ENCODE measurements at regions of chr1 and their contacts with region 1.

Region 1: GRCh38 chr1:247078261-247079140 is at the start of gene ZNF670:
- DNase-seq: peak; percentile 100
- H3K4me3 Mint-ChIP-seq: peak within 1 kb of the TSS; percentile 78
- H3K27ac Mint-ChIP-seq: peak within 1 kb of the TSS; percentile 92
- H3K4me1 Mint-ChIP-seq: peaks cover 18% of the 10 kb centered on the region
- H3K27me3 Mint-ChIP-seq: no peaks in the 10 kb centered on the region
- CTCF ChIP-seq: no peak
- total RNA-seq, gene ZNF670: 7.1 and 7.7 TPM in 2 replicates

Region 2: GRCh38 chr1:246907472-246907871 is 171.0 kb before region 1 on chr1:
- CTCF ChIA-PET with region 1: interaction called, 11 read pairs
- POLR2A ChIA-PET with region 1: interaction called, 4 read pairs
- intact Hi-C with region 1: loop called (anchors 2 kb)
- DNase-seq: peak; percentile 78
- H3K4me3 Mint-ChIP-seq: no peak overlapping the region
- H3K27ac Mint-ChIP-seq: peak overlapping the region; percentile 25
- H3K4me1 Mint-ChIP-seq: no peaks in the 10 kb centered on the region
- H3K27me3 Mint-ChIP-seq: no peaks in the 10 kb centered on the region
- CTCF ChIP-seq: peak; percentile 74

Region 3: GRCh38 chr1:247007511-247008405 is 70.7 kb before region 1 on chr1 and contains the start of gene ZNF695:
- CTCF ChIA-PET with region 1: interaction called, 5 read pairs
- POLR2A ChIA-PET with region 1: interaction called, 8 read pairs
- intact Hi-C with region 1: loop called (anchors 5 kb)
- DNase-seq: peak; percentile 100
- H3K4me3 Mint-ChIP-seq: peak within 1 kb of the TSS; percentile 96
- H3K27ac Mint-ChIP-seq: peak within 1 kb of the TSS; percentile 99
- H3K4me1 Mint-ChIP-seq: no peaks in the 10 kb centered on the region
- H3K27me3 Mint-ChIP-seq: no peaks in the 10 kb centered on the region
- CTCF ChIP-seq: no peak
- total RNA-seq, gene ZNF695: 8.7 and 13.8 TPM in 2 replicates

Region 4: DNA sequence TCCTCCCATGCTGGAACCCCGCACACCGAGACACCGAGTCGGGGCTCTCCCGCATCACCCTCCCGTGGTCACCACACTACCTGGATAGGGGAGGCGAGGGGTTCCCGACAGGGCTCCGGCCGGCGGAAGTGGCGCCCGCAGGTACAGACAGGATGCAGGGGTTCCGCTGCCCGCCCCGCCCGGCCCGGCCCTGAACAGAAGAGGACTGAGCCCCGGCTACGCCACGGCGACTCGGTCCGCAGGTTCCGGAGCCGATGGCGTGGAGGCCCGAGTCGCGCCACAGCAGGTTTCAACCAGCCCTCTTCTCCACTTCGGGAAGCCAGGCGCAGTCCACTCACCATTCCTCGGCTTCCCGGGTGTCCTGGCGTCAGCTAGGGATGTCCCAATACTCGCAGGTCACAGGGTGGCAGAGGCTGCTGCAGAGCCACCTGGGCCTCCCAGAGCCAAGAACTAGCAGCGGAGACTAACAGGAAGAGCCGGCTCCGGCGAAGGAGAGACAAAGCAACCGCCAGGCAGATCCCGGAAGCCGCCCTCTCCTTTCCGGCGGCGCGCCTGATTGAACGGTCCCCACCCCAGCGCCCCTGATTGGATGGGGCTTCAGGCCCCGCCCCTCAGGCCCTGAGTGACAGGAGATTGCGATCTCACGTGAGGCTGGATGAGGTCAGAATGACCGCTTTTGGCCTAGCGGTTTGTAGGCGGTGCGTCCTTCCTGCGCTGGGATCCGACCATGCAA is 25.5 kb after region 1 on chr1 and contains the start of gene ZNF669:
- CTCF ChIA-PET with region 1: interaction called, 3 read pairs
- POLR2A ChIA-PET with region 1: interaction called, 36 read pairs
- intact Hi-C with region 1: loop called (anchors 1 kb)
- DNase-seq: peak; percentile 99
- H3K4me3 Mint-ChIP-seq: peak within 1 kb of the TSS; percentile 94
- H3K27ac Mint-ChIP-seq: peak within 1 kb of the TSS; percentile 93
- H3K4me1 Mint-ChIP-seq: peaks cover 6% of the 10 kb centered on the region
- H3K27me3 Mint-ChIP-seq: no peaks in the 10 kb centered on the region
- CTCF ChIP-seq: no peak
- total RNA-seq, gene ZNF669: 11.6 and 11.9 TPM in 2 replicates

Region 5: DNA sequence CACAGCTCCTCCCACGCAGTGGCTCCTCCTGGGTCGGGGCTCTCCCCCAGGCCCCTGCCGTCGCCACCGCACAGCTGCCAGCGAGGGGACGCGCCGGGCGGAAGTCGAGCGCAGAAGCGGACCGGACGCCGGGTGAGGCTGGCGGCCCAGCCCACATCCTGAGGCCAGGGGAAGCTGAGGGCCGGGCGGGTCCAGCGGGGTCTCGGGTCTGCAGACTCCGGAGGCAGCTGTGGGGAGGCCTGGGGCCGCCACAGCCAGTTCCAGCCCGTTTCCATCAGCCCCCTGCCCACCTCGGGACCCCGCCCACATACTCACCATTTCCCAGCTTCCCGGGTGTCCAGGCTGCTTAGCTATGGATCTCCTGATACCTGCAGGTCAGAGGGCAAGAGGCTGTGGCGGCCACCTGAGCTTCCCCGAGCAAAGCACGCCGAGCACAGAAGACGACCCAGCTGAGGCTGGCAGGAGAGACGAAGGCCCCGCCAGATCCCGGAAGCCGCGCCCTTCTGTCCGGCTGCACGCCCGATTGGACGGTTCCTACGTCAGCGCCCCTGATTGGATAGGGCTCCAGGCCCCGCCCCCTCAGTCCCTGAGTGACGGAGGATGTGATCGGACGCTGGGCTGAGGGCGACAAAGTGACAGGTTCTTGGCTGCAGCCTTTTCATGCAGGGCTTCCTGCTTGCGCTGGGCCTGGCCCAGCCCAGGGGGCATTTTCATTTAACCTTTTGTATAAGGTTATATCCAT is 132.0 kb after region 1 on chr1:
- CTCF ChIA-PET with region 1: interaction called, 3 read pairs
- POLR2A ChIA-PET with region 1: interaction called, 11 read pairs
- intact Hi-C with region 1: no loop called
- DNase-seq: peak; percentile 99
- H3K4me3 Mint-ChIP-seq: peak overlapping the region; percentile 98
- H3K27ac Mint-ChIP-seq: peak overlapping the region; percentile 98
- H3K4me1 Mint-ChIP-seq: peaks cover 23% of the 10 kb centered on the region
- H3K27me3 Mint-ChIP-seq: peaks cover 25% of the 10 kb centered on the region
- CTCF ChIP-seq: no peak

Measured in MCF 10A (cell line).